HAP-1 (cell line): ENCODE measurements at regions of chr15 and their contacts with region 1.

Region 1: GRCh38 chr15:40002295-40002694 is 36.7 kb downstream of the SRP14 start:
- DNase-seq: no peak
- H3K4me3 ChIP-seq: no peak overlapping the region
- H3K4me1 ChIP-seq: no peaks in the 10 kb centered on the region
- H3K27me3 ChIP-seq: no peaks in the 10 kb centered on the region

Region 2: GRCh38 chr15:39782441-39783138 is 219.7 kb before region 1 on chr15 and contains the start of gene FSIP1:
- in situ Hi-C with region 1: loop called (anchors 10 kb)
- DNase-seq: peak; percentile 91 to 98
- H3K4me3 ChIP-seq: peak within 1 kb of the TSS; percentile 80
- H3K4me1 ChIP-seq: peaks cover 39% of the 10 kb centered on the region
- H3K27me3 ChIP-seq: no peaks in the 10 kb centered on the region

Region 3: DNA sequence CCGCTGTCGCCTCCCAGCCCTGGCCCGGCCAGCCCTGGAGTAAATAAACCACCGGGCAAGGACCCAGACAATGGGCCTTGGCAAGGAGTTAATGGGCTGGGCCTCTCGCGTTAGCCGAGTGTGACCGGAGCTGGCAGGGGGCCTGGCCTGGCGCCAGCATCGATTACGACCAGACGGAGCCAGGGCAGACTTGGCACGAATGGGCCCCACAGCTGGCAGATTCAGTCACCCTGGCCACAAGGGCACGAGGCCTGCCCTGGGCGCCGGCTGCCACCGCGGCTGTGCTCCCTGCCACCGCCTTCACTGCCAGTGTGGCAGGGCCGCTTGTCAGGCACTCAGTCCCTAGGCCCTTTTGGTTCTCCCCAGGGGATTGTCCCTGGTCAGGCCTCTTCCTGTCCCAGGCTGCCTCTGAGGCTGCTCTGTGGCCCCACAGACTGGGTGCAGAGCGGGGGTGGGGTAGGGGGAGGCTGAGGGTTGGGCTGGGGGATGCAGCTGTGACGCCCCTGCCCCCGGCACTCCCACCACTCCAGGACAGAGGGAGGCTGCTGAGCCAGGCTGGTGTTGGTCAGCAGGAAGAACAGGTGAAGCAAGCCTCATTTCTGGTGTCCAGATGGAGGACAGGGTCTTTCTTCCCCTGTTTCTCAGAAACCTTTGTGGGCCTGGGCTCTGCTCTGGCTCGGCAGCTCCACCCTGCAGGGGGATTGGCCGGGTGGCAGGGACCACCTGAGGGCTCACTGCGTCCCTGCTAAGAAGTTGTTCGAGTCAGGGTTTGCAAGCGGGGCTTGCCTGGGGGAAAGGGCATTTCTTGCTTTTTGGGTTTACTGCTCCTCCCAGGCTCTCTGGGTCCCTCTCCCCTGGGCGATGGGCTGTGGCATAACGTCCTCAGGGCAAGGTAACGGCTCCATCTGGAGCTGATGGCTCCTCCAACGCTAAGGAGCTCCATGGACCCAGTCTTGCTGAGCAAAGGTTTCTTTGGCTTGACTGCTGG is 67.2 kb after region 1 on chr15:
- in situ Hi-C with region 1: loop called (anchors 10 kb)
- DNase-seq: no peak
- H3K4me3 ChIP-seq: no peak overlapping the region
- H3K4me1 ChIP-seq: no peaks in the 10 kb centered on the region; the same call in 1 of the 2 replicates
- H3K27me3 ChIP-seq: no peaks in the 10 kb centered on the region